GM18951 (cell line): ENCODE measurements at regions of chr19 and their contacts with region 1.

Region 1: GRCh38 chr19:588093-588740 is 1.5 kb upstream of the HCN2 start:
- POLR2A ChIP-seq: no peak

Region 2: GRCh38 chr19:737581-738093 is 149.4 kb after region 1 on chr19:
- in situ Hi-C with region 1: loop called (anchors 25 kb)
- POLR2A ChIP-seq: no peak